ENCODE measurements at regions of chr21 and their contacts with region 1.

Region 1: GRCh38 chr21:15001857-15002606 is 62.8 kb downstream of the NRIP1 start:
- DNase-seq: no peak
- ATAC-seq: no peak
- H3K4me3 ChIP-seq: no peak overlapping the region
- H3K27ac ChIP-seq: no peak overlapping the region
- H3K4me1 ChIP-seq: peaks cover 0 to 55% (median 29%) of the 10 kb centered on the region in 12 donors
- H3K27me3 ChIP-seq: no peaks in the 10 kb centered on the region
- CTCF ChIP-seq: no peak
- POLR2A ChIP-seq: no peak

Region 2: GRCh38 chr21:14942801-14943490 is 59.1 kb before region 1 on chr21:
- intact Hi-C with region 1: loop called in 1 of 10 experiments (anchors 10 kb)
- DNase-seq: no peak
- ATAC-seq: peak in 2 of 4 donors; percentile 36 to 55
- H3K4me3 ChIP-seq: no peak overlapping the region
- H3K27ac ChIP-seq: peak overlapping the region in 2 of 12 donors; percentile 15 to 31
- H3K4me1 ChIP-seq: peaks cover 0 to 6% (median 0%) of the 10 kb centered on the region in 12 donors
- H3K27me3 ChIP-seq: no peaks in the 10 kb centered on the region
- CTCF ChIP-seq: no peak
- POLR2A ChIP-seq: no peak

Region 3: GRCh38 chr21:15058854-15059263 is 56.8 kb after region 1 on chr21:
- intact Hi-C with region 1: loop called in 3 of 10 experiments (anchors 5 kb)
- DNase-seq: no peak
- ATAC-seq: peak in 1 of 4 donors; percentile 19
- H3K4me3 ChIP-seq: peak overlapping the region in 3 of 12 donors; percentile 8 to 25 (median 14)
- H3K27ac ChIP-seq: peak overlapping the region in 7 of 12 donors; percentile 1 to 76 (median 9)
- H3K4me1 ChIP-seq: peaks cover 3 to 97% (median 81%) of the 10 kb centered on the region in 12 donors
- H3K27me3 ChIP-seq: no peaks in the 10 kb centered on the region
- CTCF ChIP-seq: no peak
- POLR2A ChIP-seq: no peak